H1 (cell line): ENCODE measurements at regions of chr10 and their contacts with region 1.

Region 1: GRCh38 chr10:73529089-73529832 is 33.4 kb upstream of the PPP3CB start:
- DNase-seq: peak; percentile 19 to 53
- H3K4me3 ChIP-seq: no peak overlapping the region
- H3K27ac ChIP-seq: no peak overlapping the region
- H3K4me1 ChIP-seq: no peaks in the 10 kb centered on the region
- H3K27me3 ChIP-seq: no peaks in the 10 kb centered on the region
- CTCF ChIP-seq: peak in 2 of 3 experiments; percentile 74 to 79; a peak in 3 of 4 replicates
- EP300 ChIP-seq: no peak
- POLR2A ChIP-seq: no peak
- RAD21 ChIP-seq: peak; percentile 92 to 94

Region 2: GRCh38 chr10:73293456-73293855 is 235.8 kb before region 1 on chr10:
- CTCF ChIA-PET with region 1: no interaction called
- POLR2A ChIA-PET with region 1: no interaction called
- DNase-seq: no peak
- H3K4me3 ChIP-seq: no peak overlapping the region
- H3K27ac ChIP-seq: no peak overlapping the region
- H3K4me1 ChIP-seq: no peaks in the 10 kb centered on the region
- H3K27me3 ChIP-seq: no peaks in the 10 kb centered on the region
- CTCF ChIP-seq: no peak
- EP300 ChIP-seq: no peak
- POLR2A ChIP-seq: no peak
- RAD21 ChIP-seq: no peak

Region 3: DNA sequence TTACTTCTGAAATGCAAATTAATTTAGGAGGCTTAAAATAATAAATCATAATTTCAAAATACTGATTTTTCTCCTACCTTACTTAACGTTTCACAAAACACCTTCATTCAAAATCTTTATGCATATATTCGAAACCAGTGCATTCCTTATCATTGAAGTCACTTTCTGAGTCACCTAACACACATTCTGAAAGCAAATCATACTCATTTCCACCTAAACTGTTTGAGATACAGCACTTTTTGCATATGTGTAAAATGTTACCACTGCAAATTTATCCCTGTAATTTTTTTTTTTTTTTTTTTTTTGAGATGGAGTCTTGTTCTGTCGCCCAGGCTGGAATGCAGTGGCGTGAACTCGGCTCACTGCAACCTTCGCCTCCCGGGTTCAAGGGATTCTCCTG is 49.1 kb before region 1 on chr10:
- CTCF ChIA-PET with region 1: no interaction called
- POLR2A ChIA-PET with region 1: no interaction called
- DNase-seq: no peak
- H3K4me3 ChIP-seq: no peak overlapping the region
- H3K27ac ChIP-seq: no peak overlapping the region
- H3K4me1 ChIP-seq: no peaks in the 10 kb centered on the region
- H3K27me3 ChIP-seq: no peaks in the 10 kb centered on the region
- CTCF ChIP-seq: no peak
- EP300 ChIP-seq: no peak
- POLR2A ChIP-seq: no peak
- RAD21 ChIP-seq: no peak

Region 4: DNA sequence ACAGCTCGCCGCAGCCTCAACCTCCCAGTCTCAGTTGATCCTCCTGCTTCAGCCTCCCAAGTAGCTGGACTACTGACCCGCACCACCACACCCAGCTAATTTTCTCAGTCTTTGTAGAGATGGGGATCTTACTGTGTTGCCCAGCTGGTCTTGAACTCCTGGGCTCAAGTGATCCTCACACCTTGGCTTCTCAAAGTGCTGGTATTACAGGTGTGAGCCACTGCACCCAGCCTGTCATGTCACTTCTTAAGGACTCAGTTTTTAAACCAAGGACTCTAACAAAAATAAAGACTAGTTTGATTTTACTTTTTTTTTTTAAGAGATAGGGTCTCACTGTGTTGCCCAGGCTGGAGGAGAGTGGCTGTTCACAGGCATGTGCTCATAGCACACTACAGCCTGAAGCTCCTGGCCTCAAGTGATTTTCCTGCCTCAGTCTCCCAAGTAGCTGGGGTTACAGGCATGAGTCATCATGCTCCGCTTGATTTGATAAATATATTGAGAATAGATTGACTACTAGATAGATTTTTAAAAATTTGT is 17.0 kb before region 1 on chr10:
- CTCF ChIA-PET with region 1: interaction called, 14 read pairs
- POLR2A ChIA-PET with region 1: no interaction called
- DNase-seq: no peak
- H3K4me3 ChIP-seq: no peak overlapping the region
- H3K27ac ChIP-seq: no peak overlapping the region
- H3K4me1 ChIP-seq: no peaks in the 10 kb centered on the region
- H3K27me3 ChIP-seq: no peaks in the 10 kb centered on the region
- CTCF ChIP-seq: no peak
- EP300 ChIP-seq: no peak
- POLR2A ChIP-seq: no peak
- RAD21 ChIP-seq: no peak

Region 5: DNA sequence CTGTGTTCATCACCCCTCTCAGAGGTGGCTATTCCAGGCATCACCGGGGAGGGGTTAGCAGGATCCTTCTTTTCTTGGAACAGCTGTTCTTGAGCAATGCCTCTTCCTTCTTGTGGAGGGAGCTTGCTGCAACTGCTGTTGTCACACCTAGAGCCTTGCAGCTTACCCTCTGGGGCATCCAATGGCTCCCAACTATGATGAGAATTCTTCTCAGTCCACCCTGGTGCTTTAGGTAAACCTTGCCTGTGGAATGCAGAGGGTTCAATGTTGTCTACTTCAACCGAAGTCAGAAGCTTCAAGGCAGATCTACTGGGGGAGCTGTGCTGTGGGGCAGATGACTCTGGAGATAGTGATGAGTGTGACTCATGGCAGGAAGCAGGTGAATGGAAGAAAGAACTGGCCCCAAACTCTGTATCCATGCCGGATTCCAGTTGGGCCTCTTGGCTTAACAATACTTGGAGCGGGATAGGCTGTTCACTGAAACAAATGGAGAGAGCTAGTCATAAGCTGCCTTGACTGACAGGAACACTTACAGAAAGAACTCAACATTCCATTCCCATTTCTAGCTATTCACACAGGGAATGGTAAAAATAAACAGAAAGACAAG is 11.9 kb before region 1 on chr10:
- CTCF ChIA-PET with region 1: interaction called, 17 read pairs
- POLR2A ChIA-PET with region 1: no interaction called
- DNase-seq: no peak
- H3K4me3 ChIP-seq: no peak overlapping the region
- H3K27ac ChIP-seq: no peak overlapping the region
- H3K4me1 ChIP-seq: no peaks in the 10 kb centered on the region
- H3K27me3 ChIP-seq: no peaks in the 10 kb centered on the region
- CTCF ChIP-seq: no peak
- EP300 ChIP-seq: no peak
- POLR2A ChIP-seq: no peak
- RAD21 ChIP-seq: no peak

Region 6: GRCh38 chr10:73545357-73545756 is 16.1 kb after region 1 on chr10:
- CTCF ChIA-PET with region 1: interaction called, 18 read pairs
- POLR2A ChIA-PET with region 1: no interaction called
- DNase-seq: no peak
- H3K4me3 ChIP-seq: no peak overlapping the region
- H3K27ac ChIP-seq: no peak overlapping the region
- H3K4me1 ChIP-seq: no peaks in the 10 kb centered on the region
- H3K27me3 ChIP-seq: no peaks in the 10 kb centered on the region
- CTCF ChIP-seq: no peak
- EP300 ChIP-seq: no peak
- POLR2A ChIP-seq: no peak
- RAD21 ChIP-seq: no peak

Region 7: DNA sequence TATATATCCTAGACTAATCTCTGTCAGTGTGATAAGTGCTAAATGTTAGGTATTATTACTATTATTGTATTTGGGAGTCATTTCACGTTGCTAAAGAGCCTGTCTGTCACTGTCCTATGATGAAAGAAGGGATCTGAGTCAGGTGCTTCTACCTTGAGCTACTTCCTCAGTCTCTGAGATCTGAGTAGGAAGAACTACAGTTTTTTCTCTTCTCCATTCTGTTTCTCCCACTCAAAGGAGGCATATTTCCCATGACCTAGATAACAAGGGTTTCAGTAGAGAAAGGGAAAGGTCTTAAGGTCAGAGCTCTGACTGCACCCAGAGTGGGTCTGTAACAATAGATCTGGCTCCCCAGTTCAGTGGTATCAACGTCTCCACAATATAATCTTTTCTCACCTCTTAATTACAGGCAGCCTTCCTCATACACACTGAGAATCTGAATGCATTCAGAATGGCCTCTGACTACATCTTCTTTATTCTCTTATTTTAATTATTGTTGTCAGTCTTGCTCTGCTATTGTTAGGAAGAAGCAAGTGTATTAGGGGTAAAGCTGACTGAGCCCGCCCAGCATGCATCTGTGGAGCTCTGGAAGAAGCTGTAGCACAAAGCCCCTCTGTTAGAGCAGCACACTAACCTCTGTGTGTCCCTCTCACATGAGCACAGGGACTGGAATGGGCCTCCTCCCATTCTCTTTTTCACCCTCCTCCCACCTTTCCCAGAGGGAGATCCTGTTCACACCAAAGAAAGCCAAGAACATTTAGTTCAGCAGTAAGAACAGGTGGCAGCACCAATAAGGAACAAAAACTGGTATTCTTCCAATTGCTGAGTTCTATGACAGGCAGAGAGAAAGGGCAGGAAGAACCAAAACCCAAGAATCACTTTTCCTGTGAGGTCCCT is 23.8 kb after region 1 on chr10:
- CTCF ChIA-PET with region 1: interaction called, 10 read pairs
- POLR2A ChIA-PET with region 1: no interaction called
- DNase-seq: no peak
- H3K4me3 ChIP-seq: no peak overlapping the region
- H3K27ac ChIP-seq: no peak overlapping the region
- H3K4me1 ChIP-seq: no peaks in the 10 kb centered on the region
- H3K27me3 ChIP-seq: no peaks in the 10 kb centered on the region
- CTCF ChIP-seq: no peak
- EP300 ChIP-seq: no peak
- POLR2A ChIP-seq: no peak
- RAD21 ChIP-seq: no peak

Region 8: GRCh38 chr10:73625884-73626752 is 96.9 kb after region 1 on chr10:
- CTCF ChIA-PET with region 1: interaction called, 27 read pairs
- POLR2A ChIA-PET with region 1: interaction called, 8 read pairs
- DNase-seq: peak; percentile 86 to 91
- H3K4me3 ChIP-seq: peak overlapping the region; percentile 83 to 99 (median 98)
- H3K27ac ChIP-seq: peak overlapping the region; percentile 95
- H3K4me1 ChIP-seq: no peaks in the 10 kb centered on the region; a peak in 1 of 7 replicates
- H3K27me3 ChIP-seq: no peaks in the 10 kb centered on the region
- CTCF ChIP-seq: no peak
- EP300 ChIP-seq: no peak
- POLR2A ChIP-seq: peak in 1 of 2 experiments; percentile 56; a peak in 2 of 3 replicates
- RAD21 ChIP-seq: no peak

Region 9: DNA sequence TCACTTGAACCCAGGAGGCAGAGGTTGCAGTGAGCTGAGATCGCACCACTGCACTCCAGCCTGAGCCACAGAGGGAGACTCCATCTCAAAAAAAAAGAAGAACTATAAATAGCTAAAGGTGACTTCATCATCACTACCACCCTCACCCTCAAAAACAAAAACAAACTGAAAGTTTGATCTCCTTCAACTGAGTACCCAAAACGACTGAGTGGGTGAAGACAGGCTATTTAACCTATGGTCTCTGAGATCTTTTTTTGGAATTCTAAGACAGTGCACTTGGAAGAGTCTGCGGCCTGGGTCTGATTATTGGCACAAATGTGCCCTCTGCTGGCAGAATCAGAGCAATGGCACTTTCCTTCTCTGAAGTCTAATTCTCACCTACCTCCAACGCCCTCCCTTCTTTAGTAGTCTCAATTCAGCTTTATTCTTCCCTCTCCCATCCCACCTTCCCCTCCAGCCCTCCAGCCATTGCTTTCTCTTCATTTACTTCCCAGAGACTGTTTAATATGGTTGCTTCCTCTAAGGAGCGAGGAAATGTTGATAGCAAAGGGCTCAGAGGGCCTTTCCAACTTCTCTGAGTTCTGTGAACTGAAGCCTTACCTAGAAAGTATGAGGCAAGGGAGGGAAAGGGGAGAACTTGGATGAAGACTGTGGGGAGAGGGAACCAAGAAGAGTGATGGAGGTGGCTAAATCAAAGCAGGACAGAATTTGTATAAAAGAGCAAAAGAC is 114.9 kb after region 1 on chr10:
- CTCF ChIA-PET with region 1: interaction called, 271 read pairs
- POLR2A ChIA-PET with region 1: interaction called, 8 read pairs
- DNase-seq: peak in 1 of 2 experiments; percentile 63
- H3K4me3 ChIP-seq: no peak overlapping the region
- H3K27ac ChIP-seq: no peak overlapping the region
- H3K4me1 ChIP-seq: peaks cover 0 to 15% (median 9%) of the 10 kb centered on the region in 4 experiments; a peak in 6 of 7 replicates
- H3K27me3 ChIP-seq: no peaks in the 10 kb centered on the region
- CTCF ChIP-seq: peak; percentile 43 to 84 (median 83)
- EP300 ChIP-seq: no peak
- POLR2A ChIP-seq: no peak
- RAD21 ChIP-seq: peak; percentile 96 to 97